Right cardiac atrium (tissue), 5 donors: ENCODE measurements at regions of chr6 and their contacts with region 1.

Region 1: GRCh38 chr6:56764081-56764566 is 121.4 kb upstream of the DST start:
- DNase-seq: peak in 1 of 3 donors; percentile 29
- ATAC-seq: peak; percentile 46 to 63
- H3K4me3 ChIP-seq: no peak overlapping the region
- H3K27ac ChIP-seq: no peak overlapping the region
- H3K4me1 ChIP-seq: peaks cover 4% of the 10 kb centered on the region
- H3K27me3 ChIP-seq: no peaks in the 10 kb centered on the region

Region 2: DNA sequence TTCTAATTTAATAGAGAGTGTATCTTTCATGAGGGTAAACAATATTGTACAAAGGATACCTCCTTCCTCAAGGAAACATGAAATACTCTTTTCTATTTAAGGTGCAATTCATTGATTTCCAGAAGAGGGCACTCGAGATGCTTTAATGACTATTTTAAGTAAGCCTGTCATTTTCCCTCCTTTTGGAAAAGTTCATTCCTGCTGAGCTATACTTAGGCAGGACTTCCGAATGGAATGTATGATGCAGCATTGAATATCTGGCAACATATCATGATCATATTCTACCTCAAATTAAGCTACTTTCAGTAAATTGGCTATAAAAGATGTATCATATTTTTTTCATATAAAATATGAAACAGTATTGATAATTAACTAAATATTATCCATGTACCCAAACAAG is 126.5 kb before region 1 on chr6:
- intact Hi-C with region 1: loop called in 1 of 4 experiments (anchors 10 kb)
- DNase-seq: no peak
- ATAC-seq: peak; percentile 59 to 74
- H3K4me3 ChIP-seq: no peak overlapping the region
- H3K27ac ChIP-seq: no peak overlapping the region
- H3K4me1 ChIP-seq: no peaks in the 10 kb centered on the region
- H3K27me3 ChIP-seq: no peaks in the 10 kb centered on the region

Region 3: GRCh38 chr6:56708810-56709597 is 55.1 kb before region 1 on chr6:
- intact Hi-C with region 1: loop called in 2 of 4 experiments (anchors 5 to 10 kb)
- DNase-seq: no peak
- ATAC-seq: peak; percentile 35 to 46
- H3K4me3 ChIP-seq: no peak overlapping the region
- H3K27ac ChIP-seq: no peak overlapping the region
- H3K4me1 ChIP-seq: peaks cover 8% of the 10 kb centered on the region
- H3K27me3 ChIP-seq: no peaks in the 10 kb centered on the region

Region 4: GRCh38 chr6:56843573-56844349 is 79.6 kb after region 1 on chr6:
- intact Hi-C with region 1: loop called in 3 of 4 experiments (anchors 5 to 10 kb)
- DNase-seq: peak; percentile 79 to 91 (median 91)
- ATAC-seq: peak; percentile 95 to 96
- H3K4me3 ChIP-seq: peak overlapping the region; percentile 79
- H3K27ac ChIP-seq: peak overlapping the region; percentile 89
- H3K4me1 ChIP-seq: no peaks in the 10 kb centered on the region
- H3K27me3 ChIP-seq: no peaks in the 10 kb centered on the region

Region 5: DNA sequence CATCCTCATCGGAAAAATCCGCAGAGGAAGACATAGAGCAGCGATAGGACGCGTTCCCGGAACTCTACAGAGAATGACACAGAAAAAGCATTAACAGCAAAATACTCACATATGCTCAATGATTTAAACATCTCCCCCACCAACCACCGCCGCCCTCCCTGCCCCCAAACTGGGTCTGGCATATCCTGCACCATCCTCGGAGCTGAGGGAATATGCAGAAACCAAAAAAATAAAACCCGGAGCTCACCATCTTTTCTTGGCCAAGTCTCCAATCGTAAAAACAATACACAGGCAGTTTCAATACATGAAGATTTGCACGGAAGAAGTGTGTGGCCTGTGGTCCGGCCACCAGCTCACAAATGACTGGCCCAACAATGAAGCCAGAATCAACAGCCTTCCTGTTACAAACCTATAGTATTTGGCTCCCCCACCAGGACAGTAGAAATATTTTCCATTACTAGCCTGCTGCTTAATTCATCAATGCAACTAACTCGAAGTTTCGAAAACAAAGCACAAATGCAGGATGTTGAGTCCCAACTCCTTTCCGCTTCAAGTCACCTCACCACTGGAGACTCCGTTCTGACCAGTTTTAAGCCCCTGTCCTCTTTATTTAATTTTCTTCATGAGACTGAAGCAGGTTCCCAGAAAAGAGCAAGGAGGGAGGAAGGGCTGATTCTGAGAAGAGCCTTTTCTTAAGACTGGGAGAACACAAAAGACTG is 87.6 kb after region 1 on chr6:
- intact Hi-C with region 1: loop called in 2 of 4 experiments (anchors 10 kb)
- DNase-seq: peak; percentile 34 to 58 (median 53)
- ATAC-seq: peak; percentile 81 to 89
- H3K4me3 ChIP-seq: peak overlapping the region; percentile 94
- H3K27ac ChIP-seq: peak overlapping the region; percentile 72
- H3K4me1 ChIP-seq: peaks cover 2% of the 10 kb centered on the region
- H3K27me3 ChIP-seq: no peaks in the 10 kb centered on the region